ENCODE measurements at regions of chr1 and their contacts with region 1.

Region 1: GRCh38 chr1:88180449-88181108 is 503.5 kb upstream of the PKN2 start:
- DNase-seq: peak; percentile 59
- ATAC-seq: peak; percentile 90

Region 2: GRCh38 chr1:88088481-88088880 is 92.1 kb before region 1 on chr1:
- intact Hi-C with region 1: no loop called
- DNase-seq: no peak
- ATAC-seq: no peak

Region 3: DNA sequence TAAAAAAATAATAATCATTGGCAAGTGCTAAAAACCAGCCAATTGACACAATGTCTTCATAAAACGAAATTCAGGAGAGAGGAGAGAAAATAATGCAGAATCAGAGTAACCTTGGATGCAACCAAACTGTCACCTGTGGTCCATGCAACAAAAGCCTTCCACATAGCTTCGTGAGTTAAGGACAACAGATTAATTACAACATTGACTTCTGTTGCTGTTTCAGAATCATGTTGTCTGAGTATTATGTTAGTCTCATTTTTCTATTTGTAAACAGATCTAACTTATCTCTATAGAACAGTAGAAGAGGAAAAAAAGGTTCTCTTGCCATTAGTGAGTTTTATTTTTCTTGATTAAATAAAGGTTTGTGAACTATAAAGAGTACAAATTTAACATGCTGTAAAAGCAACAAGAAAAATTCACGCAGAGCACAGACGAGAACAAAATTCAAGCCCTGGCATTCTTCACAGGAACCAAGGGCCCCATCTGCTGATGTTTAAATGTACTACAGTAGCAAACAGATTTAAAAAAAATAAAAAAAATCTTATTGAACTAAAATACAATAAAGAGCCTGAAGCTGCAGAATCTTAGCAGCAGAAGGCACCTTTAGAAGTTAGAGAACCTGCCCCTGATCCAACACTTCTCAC is 122.4 kb after region 1 on chr1:
- intact Hi-C with region 1: loop called (anchors 2 kb)
- DNase-seq: no peak
- ATAC-seq: no peak

Measured in left ventricle myocardium superior (tissue), 1 donor.